Right ventricle myocardium inferior (tissue), 1 donor: ENCODE measurements at regions of chr1 and their contacts with region 1.

Region 1: DNA sequence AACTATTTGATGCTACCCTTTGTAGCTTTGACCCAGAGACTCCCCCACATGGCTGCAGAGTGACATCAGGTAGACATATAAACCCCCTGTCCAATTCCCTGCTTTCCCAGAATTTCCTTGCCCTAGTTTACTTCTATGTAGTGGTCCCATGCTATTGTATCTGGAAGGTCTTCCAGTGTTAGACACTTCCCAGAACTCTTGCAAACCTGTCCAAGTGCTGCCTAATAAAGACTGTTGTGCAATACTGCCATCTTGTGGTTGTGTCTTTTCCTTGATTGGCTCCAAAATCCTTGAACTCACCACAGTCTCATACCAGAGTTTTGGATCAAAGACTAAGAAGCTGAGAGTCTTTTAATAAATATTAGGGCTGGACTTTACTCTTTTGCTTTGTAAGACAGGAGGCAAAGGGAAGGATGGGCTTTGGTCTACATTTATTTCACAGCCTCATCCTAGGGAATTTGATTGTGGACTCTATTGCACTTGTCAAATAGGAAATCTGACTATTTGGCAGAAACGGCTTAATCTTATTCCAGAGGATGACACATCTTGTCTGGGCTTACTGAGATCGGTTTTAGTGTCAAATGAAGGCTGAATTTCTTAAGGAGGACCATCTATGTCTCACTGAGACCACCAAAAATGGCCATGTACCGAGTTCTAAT is 169.9 kb downstream of the LRRC7 start:
- DNase-seq: no peak
- ATAC-seq: peak; percentile 73

Region 2: GRCh38 chr1:68470388-68470970 is 1267.2 kb before region 1 on chr1:
- intact Hi-C with region 1: loop called (anchors 2 kb)
- DNase-seq: no peak
- ATAC-seq: no peak

Region 3: DNA sequence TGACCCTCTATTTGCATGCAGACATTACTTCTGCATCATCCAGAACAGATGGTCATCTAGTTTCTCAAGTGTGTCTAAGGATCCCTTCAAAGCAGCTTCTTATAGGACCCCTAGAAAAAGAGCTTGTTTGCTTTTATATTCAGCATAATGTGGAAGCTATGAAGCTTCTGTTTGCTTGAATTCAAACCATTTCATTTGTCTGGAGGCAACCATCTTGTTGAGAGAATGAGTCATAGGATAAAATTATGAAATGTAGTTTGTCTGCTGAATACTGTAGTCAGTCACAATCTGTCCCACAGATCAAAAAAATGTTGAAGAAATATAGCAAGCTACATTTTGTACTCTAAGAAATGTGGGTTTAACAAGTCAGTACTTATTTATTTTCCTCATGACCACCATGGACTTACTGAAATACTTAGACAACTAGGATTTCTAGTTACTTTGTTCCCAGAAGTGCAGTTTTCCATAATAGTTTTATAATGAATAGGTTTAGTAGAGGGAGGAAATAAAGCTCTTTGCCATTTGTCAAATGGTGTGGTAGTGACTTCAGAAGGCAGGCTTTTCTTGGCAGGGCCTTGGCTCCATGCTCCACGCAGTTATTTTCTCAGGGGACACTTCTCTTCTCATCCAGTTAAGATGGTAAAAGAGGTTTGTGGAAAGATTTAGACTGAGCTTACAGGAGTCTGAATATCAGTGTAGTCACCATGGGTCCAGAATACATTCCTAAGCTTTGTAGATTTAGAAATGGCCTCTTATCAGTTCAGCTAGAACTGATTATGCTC is 1166.0 kb before region 1 on chr1:
- intact Hi-C with region 1: loop called (anchors 5 kb)
- DNase-seq: no peak
- ATAC-seq: no peak